Kidney (tissue), 22 donors: ENCODE measurements at regions of chr1 and their contacts with region 1.

Region 1: GRCh38 chr1:46223472-46223943 is 20.4 kb downstream of the LURAP1 start:
- DNase-seq: peak; percentile 68 to 92 (median 76)
- H3K4me3 ChIP-seq: no peak overlapping the region
- H3K27ac ChIP-seq: no peak overlapping the region
- H3K4me1 ChIP-seq: peaks cover 0 to 4% (median 0%) of the 10 kb centered on the region in 3 donors
- H3K27me3 ChIP-seq: no peaks in the 10 kb centered on the region
- CTCF ChIP-seq: peak; percentile 94

Region 2: GRCh38 chr1:46036894-46037839 is 186.3 kb before region 1 on chr1:
- intact Hi-C with region 1: loop called (anchors 10 kb)
- DNase-seq: peak; percentile 86 to 91 (median 90)
- H3K4me3 ChIP-seq: no peak overlapping the region
- H3K27ac ChIP-seq: no peak overlapping the region
- H3K4me1 ChIP-seq: peaks cover 0 to 15% (median 11%) of the 10 kb centered on the region in 3 donors
- H3K27me3 ChIP-seq: no peaks in the 10 kb centered on the region
- CTCF ChIP-seq: peak; percentile 97

Region 3: DNA sequence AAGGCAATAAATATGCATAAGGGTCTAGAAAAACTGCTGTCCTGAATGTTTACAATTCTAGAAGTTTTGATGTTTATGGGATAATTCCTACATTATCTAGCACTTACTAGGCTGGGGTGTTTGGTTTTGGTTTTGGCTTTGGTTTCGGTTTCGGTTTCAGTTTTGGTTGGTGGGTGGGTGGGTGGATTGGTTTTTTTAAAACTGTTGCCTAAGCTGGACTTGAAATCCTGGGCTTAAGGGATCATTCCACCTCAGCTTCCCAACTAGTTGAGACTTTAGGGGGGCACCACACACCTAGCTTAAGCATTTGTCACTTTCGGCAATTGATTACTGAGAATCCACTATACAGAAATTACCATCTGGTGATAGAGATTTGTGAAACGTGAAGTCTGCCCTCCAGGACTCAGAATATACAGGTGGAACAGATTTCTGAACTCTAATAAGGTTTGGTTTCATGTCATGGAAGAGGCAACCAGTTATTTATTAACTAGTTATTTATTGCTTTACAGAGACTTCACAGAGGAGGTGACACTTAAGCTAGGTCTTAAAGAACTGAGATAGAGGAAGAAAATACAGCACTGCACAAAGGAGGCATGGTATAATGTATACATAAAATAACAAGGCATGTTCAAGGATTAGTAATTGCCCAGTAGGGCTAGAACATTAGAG is 160.7 kb before region 1 on chr1:
- intact Hi-C with region 1: no loop called
- DNase-seq: peak in 2 of 5 donors; percentile 17
- H3K4me3 ChIP-seq: peak overlapping the region in 2 of 3 donors; percentile 35 to 36
- H3K27ac ChIP-seq: no peak overlapping the region
- H3K4me1 ChIP-seq: peaks cover 0 to 15% (median 3%) of the 10 kb centered on the region in 3 donors
- H3K27me3 ChIP-seq: no peaks in the 10 kb centered on the region
- CTCF ChIP-seq: no peak

Region 4: DNA sequence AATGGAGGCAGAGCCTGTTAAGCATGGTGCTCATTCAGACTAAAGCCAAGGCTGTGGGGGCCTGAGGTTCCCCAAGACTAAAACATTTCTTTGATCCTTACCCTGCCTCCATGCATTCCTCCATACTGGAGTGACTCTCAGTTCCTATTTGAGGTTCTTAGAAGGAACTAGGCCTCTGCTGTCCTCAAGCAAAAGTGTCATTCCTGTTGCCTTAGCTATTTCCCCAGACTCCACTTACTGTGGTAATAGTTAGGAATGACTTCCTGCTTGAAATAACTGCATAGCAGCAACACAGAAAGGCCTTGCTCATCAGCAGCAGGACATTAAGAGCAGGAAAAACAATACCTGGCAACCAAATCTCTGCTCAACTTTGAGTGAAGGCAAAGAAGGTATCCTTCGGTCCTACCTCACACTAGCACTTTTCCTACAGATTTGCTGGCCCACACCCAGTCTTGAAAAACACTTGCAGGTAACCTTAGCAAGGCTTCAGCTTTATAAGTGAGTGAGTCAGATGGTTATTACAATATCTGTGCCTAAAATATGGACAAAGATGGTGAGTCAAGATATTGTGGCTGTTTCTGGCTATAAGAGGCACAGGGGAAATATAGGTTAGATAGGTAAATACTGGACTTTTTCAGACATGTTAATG is 65.1 kb after region 1 on chr1:
- intact Hi-C with region 1: no loop called
- DNase-seq: no peak
- H3K4me3 ChIP-seq: no peak overlapping the region
- H3K27ac ChIP-seq: no peak overlapping the region
- H3K4me1 ChIP-seq: no peaks in the 10 kb centered on the region
- H3K27me3 ChIP-seq: no peaks in the 10 kb centered on the region
- CTCF ChIP-seq: no peak

Region 5: DNA sequence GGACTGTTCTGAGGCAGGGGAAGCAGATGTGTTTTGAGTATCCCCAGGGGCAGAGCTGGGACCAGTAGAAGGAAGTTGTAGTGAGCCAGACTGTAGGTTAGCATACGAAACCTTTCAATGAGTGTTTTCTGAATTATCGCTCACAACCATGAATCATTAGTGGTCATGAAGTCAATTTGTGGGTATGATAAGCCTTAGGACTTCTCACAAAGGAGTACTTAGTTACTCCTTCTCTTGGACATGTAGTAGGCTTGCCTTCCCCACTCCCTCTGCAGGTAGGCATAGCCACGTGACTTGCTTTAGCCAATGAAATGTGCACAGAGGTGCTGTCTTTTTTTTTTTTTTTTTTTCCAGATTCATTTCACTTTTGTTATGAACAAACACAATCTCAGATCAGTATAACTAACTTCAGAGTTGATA is 146.7 kb after region 1 on chr1:
- intact Hi-C with region 1: no loop called
- DNase-seq: no peak
- H3K4me3 ChIP-seq: no peak overlapping the region
- H3K27ac ChIP-seq: no peak overlapping the region
- H3K4me1 ChIP-seq: peaks cover 0 to 3% (median 0%) of the 10 kb centered on the region in 3 donors
- H3K27me3 ChIP-seq: no peaks in the 10 kb centered on the region
- CTCF ChIP-seq: no peak